B cell (primary cell): ENCODE measurements at regions of chr13 and their contacts with region 1.

Region 1: DNA sequence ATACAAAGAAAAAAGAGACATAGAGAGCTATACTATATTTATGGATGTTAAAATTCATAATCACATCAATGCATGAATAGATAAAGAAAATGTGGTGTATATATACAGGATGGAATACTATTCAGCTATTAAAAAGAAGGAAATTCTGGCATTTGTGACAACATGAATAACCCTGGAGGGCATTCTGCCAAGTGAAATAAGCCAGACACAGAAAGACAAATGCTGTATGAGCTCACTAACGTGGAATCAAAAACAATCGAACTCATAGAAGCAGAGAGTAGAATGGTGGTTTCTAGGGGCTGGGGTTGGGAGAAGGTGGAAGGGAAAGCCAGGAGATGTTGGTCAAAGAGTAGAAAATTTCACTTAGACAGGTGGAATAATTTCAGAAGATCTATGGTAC is 24.0 kb downstream of the UTP14C start:
- DNase-seq: no peak
- ATAC-seq: no peak
- H3K4me3 ChIP-seq: no peak overlapping the region
- H3K4me3 Mint-ChIP-seq: no peak overlapping the region
- H3K27ac ChIP-seq: no peak overlapping the region
- H3K27ac Mint-ChIP-seq: no peak overlapping the region
- H3K4me1 ChIP-seq: no peaks in the 10 kb centered on the region
- H3K4me1 Mint-ChIP-seq: no peaks in the 10 kb centered on the region
- H3K27me3 ChIP-seq: no peaks in the 10 kb centered on the region
- H3K27me3 Mint-ChIP-seq: peaks cover 7% of the 10 kb centered on the region
- CTCF ChIP-seq: no peak

Region 2: DNA sequence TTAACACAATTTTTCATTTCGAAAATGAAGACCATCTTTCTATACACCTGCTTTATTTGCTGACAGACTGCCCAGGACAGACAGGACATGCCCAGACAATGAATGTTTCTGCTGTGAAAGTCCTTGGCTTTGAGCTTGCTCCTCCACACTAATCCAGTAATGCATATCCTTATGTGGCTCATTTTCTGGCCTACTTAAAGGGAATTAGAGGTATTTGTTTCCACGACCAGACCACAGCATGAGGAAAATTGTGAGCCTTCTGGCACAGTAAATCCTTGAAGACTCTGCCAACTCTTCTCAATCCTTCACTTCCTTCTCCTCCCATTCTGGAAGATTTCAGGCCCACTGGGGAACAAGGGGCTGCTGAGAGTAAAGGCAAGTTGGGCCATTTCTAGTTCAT is 161.0 kb before region 1 on chr13:
- CTCF ChIA-PET with region 1: no interaction called
- POLR2A ChIA-PET with region 1: no interaction called
- intact Hi-C with region 1: no loop called
- DNase-seq: no peak
- ATAC-seq: no peak
- H3K4me3 ChIP-seq: no peak overlapping the region
- H3K4me3 Mint-ChIP-seq: no peak overlapping the region
- H3K27ac ChIP-seq: no peak overlapping the region
- H3K27ac Mint-ChIP-seq: no peak overlapping the region
- H3K4me1 ChIP-seq: no peaks in the 10 kb centered on the region
- H3K4me1 Mint-ChIP-seq: no peaks in the 10 kb centered on the region
- H3K27me3 ChIP-seq: no peaks in the 10 kb centered on the region
- H3K27me3 Mint-ChIP-seq: peaks cover 22% of the 10 kb centered on the region
- CTCF ChIP-seq: no peak

Region 3: DNA sequence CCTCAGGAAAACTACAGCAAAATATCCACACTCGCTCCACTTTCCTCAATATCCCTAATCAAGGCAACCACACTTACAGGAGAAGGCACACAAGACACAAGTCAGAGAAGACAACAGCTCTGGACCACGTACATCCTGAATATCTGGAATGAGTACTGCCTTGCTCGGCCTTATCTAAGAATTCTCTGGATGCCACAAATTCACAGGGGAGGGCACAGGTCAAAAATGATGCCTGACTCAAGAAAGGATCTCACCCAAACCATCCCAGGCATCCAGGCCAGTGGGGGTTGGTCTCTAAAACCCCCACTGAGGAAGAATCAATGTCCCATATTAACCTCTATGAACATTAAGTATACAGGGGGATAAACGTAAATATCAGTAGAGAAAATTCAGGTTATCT is 67.2 kb before region 1 on chr13:
- CTCF ChIA-PET with region 1: no interaction called
- POLR2A ChIA-PET with region 1: no interaction called
- intact Hi-C with region 1: no loop called
- DNase-seq: no peak
- ATAC-seq: no peak
- H3K4me3 ChIP-seq: no peak overlapping the region
- H3K4me3 Mint-ChIP-seq: no peak overlapping the region
- H3K27ac ChIP-seq: no peak overlapping the region
- H3K27ac Mint-ChIP-seq: no peak overlapping the region
- H3K4me1 ChIP-seq: no peaks in the 10 kb centered on the region
- H3K4me1 Mint-ChIP-seq: no peaks in the 10 kb centered on the region
- H3K27me3 ChIP-seq: no peaks in the 10 kb centered on the region
- H3K27me3 Mint-ChIP-seq: peaks cover 36% of the 10 kb centered on the region
- CTCF ChIP-seq: no peak

Region 4: DNA sequence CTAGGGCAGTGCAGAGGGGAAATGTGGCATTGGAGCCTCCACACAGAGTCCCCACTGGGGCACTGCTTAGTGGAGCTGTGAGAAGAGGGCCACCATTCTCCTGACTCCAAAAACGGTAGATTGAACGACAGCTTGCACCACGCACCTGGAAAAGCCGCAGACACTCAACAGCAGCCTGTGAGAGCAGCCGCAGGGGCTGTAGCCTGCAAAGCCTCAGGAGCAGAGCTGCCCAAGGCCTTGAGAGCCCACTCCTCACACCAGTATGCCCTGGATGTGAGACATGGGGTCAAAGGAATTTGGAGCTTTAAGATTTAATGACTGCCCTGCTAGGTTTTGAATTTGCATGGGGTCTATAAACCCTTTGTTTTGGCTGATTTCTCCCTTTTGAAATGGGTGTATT is 48.7 kb after region 1 on chr13:
- CTCF ChIA-PET with region 1: no interaction called
- POLR2A ChIA-PET with region 1: no interaction called
- intact Hi-C with region 1: loop called (anchors 10 kb)
- DNase-seq: no peak
- ATAC-seq: no peak
- H3K4me3 ChIP-seq: no peak overlapping the region
- H3K4me3 Mint-ChIP-seq: no peak overlapping the region
- H3K27ac ChIP-seq: no peak overlapping the region
- H3K27ac Mint-ChIP-seq: no peak overlapping the region
- H3K4me1 ChIP-seq: no peaks in the 10 kb centered on the region
- H3K4me1 Mint-ChIP-seq: no peaks in the 10 kb centered on the region
- H3K27me3 ChIP-seq: no peaks in the 10 kb centered on the region
- H3K27me3 Mint-ChIP-seq: peaks cover 14% of the 10 kb centered on the region
- CTCF ChIP-seq: no peak